H1 (cell line): ENCODE measurements at regions of chr15 and their contacts with region 1.

Region 1: GRCh38 chr15:41564286-41564959 is 5.4 kb downstream of the TYRO3 start:
- DNase-seq: peak in 1 of 2 experiments; percentile 62
- H3K4me3 ChIP-seq: peak overlapping the region in 1 of 4 experiments; percentile 5; a peak in 2 of 8 replicates
- H3K27ac ChIP-seq: peak overlapping the region; percentile 85
- H3K4me1 ChIP-seq: peaks cover 26 to 74% (median 66%) of the 10 kb centered on the region in 4 experiments
- H3K27me3 ChIP-seq: no peaks in the 10 kb centered on the region; a peak in 1 of 7 replicates
- CTCF ChIP-seq: peak in 1 of 3 experiments; percentile 18; a peak in 1 of 4 replicates
- EP300 ChIP-seq: peak in 1 of 2 experiments; percentile 40; a peak in 1 of 3 replicates
- POLR2A ChIP-seq: peak; percentile 18 to 70
- RAD21 ChIP-seq: no peak

Region 2: GRCh38 chr15:41544650-41545015 is 19.8 kb before region 1 on chr15:
- CTCF ChIA-PET with region 1: interaction called, 3 read pairs
- POLR2A ChIA-PET with region 1: interaction called, 18 read pairs
- DNase-seq: no peak
- H3K4me3 ChIP-seq: peak overlapping the region in 1 of 4 experiments; percentile 76; a peak in 3 of 8 replicates
- H3K27ac ChIP-seq: no peak overlapping the region
- H3K4me1 ChIP-seq: no peaks in the 10 kb centered on the region; a peak in 2 of 7 replicates
- H3K27me3 ChIP-seq: peaks cover 0 to 3% (median 1%) of the 10 kb centered on the region in 4 experiments; a peak in 1 of 7 replicates
- CTCF ChIP-seq: no peak
- EP300 ChIP-seq: no peak
- POLR2A ChIP-seq: no peak
- RAD21 ChIP-seq: no peak

Region 3: DNA sequence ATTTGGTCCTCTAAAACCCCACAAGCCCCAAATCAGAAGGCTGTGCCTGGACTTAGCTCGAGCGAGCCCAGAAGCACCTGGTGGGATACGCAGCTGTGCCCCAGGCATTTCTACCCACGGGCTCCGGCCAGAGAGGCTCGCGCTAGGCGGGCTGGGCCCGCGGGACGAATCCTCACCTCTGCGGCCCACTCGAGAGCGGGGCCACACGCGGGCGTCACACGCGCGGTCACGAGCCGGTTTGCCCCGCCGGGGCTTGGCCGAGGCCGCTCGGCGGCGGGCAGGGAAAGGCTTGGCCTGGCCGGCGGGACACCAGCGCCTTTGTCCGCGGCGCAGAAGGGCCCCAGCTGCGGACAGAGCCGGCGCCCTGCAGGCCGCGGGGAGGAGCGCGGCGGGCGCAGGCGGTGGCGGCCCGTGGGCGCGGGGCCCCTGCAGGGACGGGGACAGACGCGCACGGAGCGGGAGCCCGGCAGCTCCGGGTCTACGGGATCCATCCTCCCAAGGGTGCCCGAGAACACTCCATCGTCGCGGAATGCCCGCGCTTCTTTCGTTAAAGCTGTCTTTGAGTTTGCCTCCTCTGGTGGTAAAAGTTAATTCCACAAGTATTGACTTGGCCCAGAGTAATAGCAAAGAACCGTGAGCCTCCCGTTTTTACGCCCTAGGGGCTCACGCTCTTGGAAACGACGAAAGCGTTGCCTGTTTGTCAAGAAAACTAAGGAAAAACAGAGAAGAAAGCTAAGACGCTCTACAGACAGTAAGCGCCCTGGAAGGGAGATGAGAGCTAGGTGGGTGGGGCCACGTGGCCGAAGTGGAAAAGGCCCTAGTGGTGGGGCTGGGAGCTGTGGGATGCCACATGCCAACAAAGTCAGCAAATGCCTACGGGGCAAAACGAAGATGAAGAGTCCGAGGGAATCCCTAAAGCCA is 21.0 kb after region 1 on chr15:
- CTCF ChIA-PET with region 1: interaction called, 80 read pairs
- POLR2A ChIA-PET with region 1: interaction called, 643 read pairs
- DNase-seq: peak in 1 of 2 experiments; percentile 83
- H3K4me3 ChIP-seq: peak overlapping the region; percentile 11 to 62 (median 35)
- H3K27ac ChIP-seq: 0 out of 2 replicates have a peak overlapping the region, but pooled peaks have one; percentile 6
- H3K4me1 ChIP-seq: peaks cover 0 to 7% (median 3%) of the 10 kb centered on the region in 4 experiments; a peak in 4 of 7 replicates
- H3K27me3 ChIP-seq: no peaks in the 10 kb centered on the region
- CTCF ChIP-seq: peak in 2 of 3 experiments; percentile 8 to 25; a peak in 3 of 4 replicates
- EP300 ChIP-seq: no peak
- POLR2A ChIP-seq: no peak; a peak in 1 of 3 replicates
- RAD21 ChIP-seq: peak in 1 of 2 experiments; percentile 36; a peak in 2 of 4 replicates

Region 4: DNA sequence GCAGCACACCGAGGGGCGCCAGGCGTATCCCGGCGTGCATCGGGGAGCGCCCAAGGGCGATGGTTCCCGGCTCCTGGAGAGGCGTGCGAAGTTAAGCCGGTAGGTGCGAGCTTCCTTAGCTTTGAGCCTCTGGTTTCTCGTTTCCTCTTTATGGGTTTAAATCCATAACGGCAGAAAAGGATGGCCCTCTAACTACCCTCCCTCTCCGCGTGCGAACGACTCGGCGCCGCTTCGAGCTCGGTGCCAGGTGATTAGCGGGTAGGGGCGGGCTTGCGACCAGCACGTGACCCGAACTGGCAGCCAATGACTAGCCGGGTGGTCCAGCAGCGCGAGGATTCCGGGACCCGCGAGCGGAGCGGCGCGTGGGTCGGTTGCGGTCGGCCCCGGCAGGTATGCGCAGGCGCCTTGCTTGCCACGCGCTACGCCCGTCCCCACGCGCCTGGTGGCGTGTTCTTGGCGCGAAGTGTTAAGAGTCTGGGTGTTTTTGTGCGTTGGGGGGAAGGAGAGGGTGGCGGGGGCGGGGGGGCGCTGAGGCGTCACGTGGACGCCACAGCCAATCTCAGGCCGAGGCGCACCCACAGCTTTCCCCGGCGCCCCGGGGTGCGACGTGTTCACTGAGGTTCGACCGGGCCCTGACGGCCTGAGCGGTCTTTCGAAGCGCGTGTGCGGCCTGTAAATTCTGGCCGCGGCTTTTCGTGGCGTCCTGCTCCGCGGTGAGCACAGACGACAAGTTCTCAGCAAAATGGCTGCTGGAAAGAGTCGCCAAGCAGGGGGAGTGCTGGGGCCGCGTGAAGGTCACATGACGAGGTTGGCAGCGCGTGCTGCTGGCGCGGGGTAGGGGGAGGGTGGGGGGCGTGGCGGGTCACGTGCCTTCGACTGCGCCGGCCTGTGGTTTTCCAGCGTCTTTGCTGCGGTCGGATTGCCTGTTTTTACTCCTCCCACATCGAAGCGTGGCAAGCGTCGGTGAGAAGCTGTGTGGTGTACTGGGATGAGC is 57.1 kb after region 1 on chr15:
- CTCF ChIA-PET with region 1: interaction called, 4 read pairs
- POLR2A ChIA-PET with region 1: interaction called, 20 read pairs
- DNase-seq: peak; percentile 60 to 85
- H3K4me3 ChIP-seq: peak overlapping the region; percentile 16 to 61 (median 39)
- H3K27ac ChIP-seq: no peak overlapping the region
- H3K4me1 ChIP-seq: peaks cover 0 to 7% (median 4%) of the 10 kb centered on the region in 4 experiments; a peak in 4 of 7 replicates
- H3K27me3 ChIP-seq: peaks cover 0 to 6% (median 3%) of the 10 kb centered on the region in 4 experiments; a peak in 4 of 7 replicates
- CTCF ChIP-seq: no peak
- EP300 ChIP-seq: 0 out of 3 replicates have a peak, but pooled peaks of 1 of the 2 experiments have one; percentile 29
- POLR2A ChIP-seq: peak; percentile 50 to 52; a peak in 1 of 3 replicates
- RAD21 ChIP-seq: no peak

Region 5: DNA sequence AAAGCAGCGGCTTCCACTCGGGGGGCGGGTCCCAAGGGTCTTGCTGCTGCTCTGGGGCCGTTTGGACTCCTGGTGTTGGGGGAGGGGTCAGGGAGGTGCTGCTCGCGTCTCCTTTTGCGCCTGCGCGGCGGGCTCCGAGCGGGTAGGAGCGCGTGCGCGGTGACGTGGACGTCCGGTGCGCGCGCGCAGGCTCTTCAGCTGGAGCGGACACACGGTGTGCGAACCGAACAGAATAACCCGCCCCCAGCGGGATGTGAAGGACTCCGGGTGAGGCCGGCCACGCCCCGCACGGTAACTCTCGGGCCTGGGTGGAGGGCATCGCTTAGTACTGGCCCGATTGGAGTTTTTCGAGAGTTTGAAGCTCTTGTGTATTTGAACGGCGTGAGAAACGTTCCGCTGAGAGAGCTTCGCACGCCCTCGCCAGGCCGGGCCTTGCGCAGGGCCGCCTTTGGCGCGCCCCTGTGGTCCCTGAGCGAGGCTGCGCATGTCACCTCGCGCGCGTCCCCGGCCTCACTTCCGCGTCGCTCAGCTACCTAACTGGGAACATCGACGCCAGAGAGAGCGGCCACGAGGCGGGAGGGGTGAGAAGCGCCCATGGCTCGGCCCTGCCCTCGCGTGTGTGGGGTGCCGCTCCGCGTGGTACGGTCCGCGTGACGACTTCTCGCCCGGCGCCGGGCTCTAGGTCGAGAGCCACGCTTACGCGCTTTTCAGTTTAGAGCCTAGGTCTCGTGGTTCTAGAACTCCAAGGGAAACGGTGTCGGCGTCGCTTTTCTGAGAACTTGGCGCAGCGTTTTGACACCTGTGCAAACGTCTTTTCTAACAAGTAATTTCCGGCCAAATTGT is 96.0 kb after region 1 on chr15 and contains the start of gene MGA:
- CTCF ChIA-PET with region 1: interaction called, 4 read pairs
- POLR2A ChIA-PET with region 1: interaction called, 10 read pairs
- DNase-seq: peak; percentile 89 to 95
- H3K4me3 ChIP-seq: peak within 1 kb of the TSS; percentile 65 to 84 (median 69)
- H3K27ac ChIP-seq: peak within 1 kb of the TSS; percentile 38; the same call in 1 of the 2 replicates
- H3K4me1 ChIP-seq: peaks cover 0 to 3% (median under 1%) of the 10 kb centered on the region in 4 experiments; a peak in 2 of 7 replicates
- H3K27me3 ChIP-seq: peaks cover 0 to 12% (median 6%) of the 10 kb centered on the region in 4 experiments; a peak in 4 of 7 replicates
- CTCF ChIP-seq: peak in 2 of 3 experiments; percentile 11 to 19; a peak in 2 of 4 replicates
- EP300 ChIP-seq: no peak
- POLR2A ChIP-seq: 0 out of 3 replicates have a peak, but pooled peaks of 1 of the 2 experiments have one; percentile 65
- RAD21 ChIP-seq: peak; percentile 15 to 18; a peak in 2 of 4 replicates
- total RNA-seq, gene MGA: 53.2 and 55.7 TPM in 2 replicates

Region 6: GRCh38 chr15:41688671-41689070 is 124.2 kb after region 1 on chr15:
- CTCF ChIA-PET with region 1: no interaction called
- POLR2A ChIA-PET with region 1: no interaction called
- DNase-seq: no peak
- H3K4me3 ChIP-seq: no peak overlapping the region
- H3K27ac ChIP-seq: no peak overlapping the region
- H3K4me1 ChIP-seq: no peaks in the 10 kb centered on the region
- H3K27me3 ChIP-seq: no peaks in the 10 kb centered on the region
- CTCF ChIP-seq: no peak
- EP300 ChIP-seq: no peak
- POLR2A ChIP-seq: no peak
- RAD21 ChIP-seq: no peak

Region 7: GRCh38 chr15:41804361-41804760 is 239.9 kb after region 1 on chr15:
- CTCF ChIA-PET with region 1: no interaction called
- POLR2A ChIA-PET with region 1: no interaction called
- DNase-seq: no peak
- H3K4me3 ChIP-seq: no peak overlapping the region
- H3K27ac ChIP-seq: no peak overlapping the region
- H3K4me1 ChIP-seq: peaks cover 0 to 4% (median 2%) of the 10 kb centered on the region in 4 experiments; a peak in 4 of 7 replicates
- H3K27me3 ChIP-seq: no peaks in the 10 kb centered on the region
- CTCF ChIP-seq: no peak
- EP300 ChIP-seq: no peak
- POLR2A ChIP-seq: no peak
- RAD21 ChIP-seq: no peak